Activated CD4-positive, alpha-beta memory T cell treated with anti-CD3 and anti-CD28 coated beads, Interleukin-2, amount 10 ng/mL, durations not matched to agents 7 days and 5 days (primary cell): ENCODE measurements at regions of chr6 and their contacts with region 1.

Region 1: DNA sequence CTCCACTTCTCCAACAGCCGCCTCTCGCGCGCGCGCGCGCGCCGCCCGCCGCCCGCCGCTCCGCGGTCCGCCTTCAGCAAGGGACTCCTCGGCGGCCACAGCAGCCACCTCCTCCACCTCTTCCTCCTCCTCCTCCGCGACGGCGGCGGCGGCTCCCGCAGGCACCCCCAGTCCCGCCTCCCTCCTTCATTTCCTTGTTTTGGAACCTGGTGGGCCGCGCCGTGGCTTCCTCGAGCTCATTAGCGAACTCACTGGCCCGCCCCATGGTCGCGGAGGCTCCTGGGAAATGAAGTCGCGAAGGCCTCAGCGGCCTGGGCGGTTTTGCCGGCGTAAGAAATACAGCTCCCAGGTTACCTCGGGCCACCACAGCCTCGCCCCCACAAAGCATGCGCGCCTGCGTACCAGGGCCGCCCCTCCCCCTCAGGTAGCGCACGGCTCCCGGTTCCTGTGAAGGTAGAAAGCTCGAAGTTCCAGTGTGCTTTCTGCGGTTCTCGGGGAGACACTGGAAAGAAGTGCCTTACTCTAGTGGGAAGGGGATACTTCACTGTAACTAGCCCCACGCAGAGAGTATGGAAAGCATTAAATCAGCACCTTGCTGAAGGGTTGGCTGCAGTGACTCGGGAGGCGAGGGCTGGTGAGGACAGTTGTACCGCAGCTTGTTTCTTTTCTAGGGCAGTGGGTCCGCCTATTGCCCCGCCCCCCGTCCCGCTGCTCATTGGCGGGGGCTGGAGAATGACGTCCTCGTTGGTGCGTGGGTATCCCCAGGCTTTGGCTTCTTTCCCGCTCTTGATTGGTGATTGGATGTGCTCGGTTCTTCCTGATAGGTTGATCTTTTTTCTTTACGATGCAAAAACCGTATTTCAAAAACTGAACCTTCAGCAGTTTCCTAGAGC is at the start of gene CDK19:
- DNase-seq: peak; percentile 99
- H3K4me3 Mint-ChIP-seq: peak within 1 kb of the TSS; percentile 100
- H3K27ac Mint-ChIP-seq: peak within 1 kb of the TSS; percentile 99
- H3K4me1 Mint-ChIP-seq: peaks cover 56% of the 10 kb centered on the region
- H3K27me3 Mint-ChIP-seq: no peaks in the 10 kb centered on the region
- total RNA-seq, gene CDK19: 30.8 to 33.2 TPM

Region 2: DNA sequence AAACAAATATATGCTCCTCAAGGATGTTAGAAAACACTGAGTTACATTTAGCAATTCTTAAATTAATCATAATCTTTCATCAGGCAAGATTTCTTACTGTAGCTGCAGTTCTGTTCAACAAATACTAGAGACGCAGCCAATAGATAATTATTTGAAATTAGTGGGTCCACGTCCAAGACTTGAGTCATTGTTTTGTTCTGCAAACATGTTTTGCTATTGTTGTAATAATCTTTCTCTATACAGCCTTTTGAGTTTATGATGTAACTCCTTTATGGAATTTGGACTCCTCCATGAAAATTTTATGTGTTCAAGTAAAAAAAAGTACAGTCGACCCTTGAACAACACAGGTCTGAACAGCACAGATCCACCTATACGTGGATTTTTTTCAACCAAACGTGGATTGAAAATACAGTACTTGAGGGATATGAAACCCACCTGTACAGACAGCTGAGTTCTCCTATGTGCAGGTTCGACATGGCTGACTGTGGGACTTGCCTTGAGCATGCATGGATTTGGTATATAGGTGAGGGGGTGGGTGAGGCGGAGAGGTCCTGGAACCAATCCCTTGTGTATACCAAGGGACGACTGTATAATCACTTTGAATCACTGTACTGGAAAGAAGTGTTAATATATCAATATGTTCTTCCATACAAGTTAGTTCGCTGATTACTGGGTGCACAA is 297.7 kb before region 1 on chr6:
- CTCF ChIA-PET with region 1: no interaction called
- POLR2A ChIA-PET with region 1: no interaction called
- DNase-seq: no peak
- H3K4me3 Mint-ChIP-seq: no peak overlapping the region
- H3K27ac Mint-ChIP-seq: no peak overlapping the region
- H3K4me1 Mint-ChIP-seq: no peaks in the 10 kb centered on the region
- H3K27me3 Mint-ChIP-seq: peaks cover 9% of the 10 kb centered on the region

Region 3: GRCh38 chr6:110560239-110561007 is 255.0 kb before region 1 on chr6:
- CTCF ChIA-PET with region 1: no interaction called
- POLR2A ChIA-PET with region 1: interaction called, 13 read pairs
- DNase-seq: peak; percentile 39
- H3K4me3 Mint-ChIP-seq: peak overlapping the region; percentile 19
- H3K27ac Mint-ChIP-seq: peak overlapping the region; percentile 98
- H3K4me1 Mint-ChIP-seq: peaks cover 37% of the 10 kb centered on the region
- H3K27me3 Mint-ChIP-seq: no peaks in the 10 kb centered on the region

Region 4: GRCh38 chr6:110688661-110689268 is 126.7 kb before region 1 on chr6:
- CTCF ChIA-PET with region 1: no interaction called
- POLR2A ChIA-PET with region 1: interaction called, 15 read pairs
- DNase-seq: no peak
- H3K4me3 Mint-ChIP-seq: no peak overlapping the region
- H3K27ac Mint-ChIP-seq: no peak overlapping the region
- H3K4me1 Mint-ChIP-seq: peaks cover 26% of the 10 kb centered on the region
- H3K27me3 Mint-ChIP-seq: no peaks in the 10 kb centered on the region

Region 5: DNA sequence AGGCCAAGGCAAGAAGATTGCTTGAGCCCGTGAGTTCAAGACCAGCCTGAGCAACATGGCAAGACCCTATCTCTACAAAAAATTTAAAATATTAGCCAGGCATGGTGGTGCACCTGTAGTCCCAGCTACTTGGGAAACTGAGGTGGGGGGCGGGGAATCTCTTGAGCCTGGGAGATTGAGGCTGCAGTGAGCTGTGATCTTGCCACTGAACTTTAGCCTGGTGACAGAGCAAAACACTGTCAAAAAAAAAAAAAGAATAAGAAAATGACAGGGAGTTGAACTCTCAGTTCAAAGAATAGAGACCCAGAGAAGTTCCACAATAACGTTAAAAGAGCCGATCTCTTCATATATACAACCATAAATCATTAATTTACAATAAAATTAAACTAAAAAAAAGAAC is 34.3 kb after region 1 on chr6:
- CTCF ChIA-PET with region 1: no interaction called
- POLR2A ChIA-PET with region 1: no interaction called
- DNase-seq: no peak
- H3K4me3 Mint-ChIP-seq: no peak overlapping the region
- H3K27ac Mint-ChIP-seq: no peak overlapping the region
- H3K4me1 Mint-ChIP-seq: no peaks in the 10 kb centered on the region
- H3K27me3 Mint-ChIP-seq: peaks cover 2% of the 10 kb centered on the region

Region 6: GRCh38 chr6:110864824-110865223 is 49.4 kb after region 1 on chr6:
- CTCF ChIA-PET with region 1: interaction called, 6 read pairs
- POLR2A ChIA-PET with region 1: interaction called, 27 read pairs
- DNase-seq: no peak
- H3K4me3 Mint-ChIP-seq: no peak overlapping the region
- H3K27ac Mint-ChIP-seq: no peak overlapping the region
- H3K4me1 Mint-ChIP-seq: peaks cover 12% of the 10 kb centered on the region
- H3K27me3 Mint-ChIP-seq: no peaks in the 10 kb centered on the region

Region 7: GRCh38 chr6:110882271-110882613 is 66.8 kb after region 1 on chr6:
- CTCF ChIA-PET with region 1: interaction called, 56 read pairs
- POLR2A ChIA-PET with region 1: interaction called, 813 read pairs
- DNase-seq: no peak
- H3K4me3 Mint-ChIP-seq: no peak overlapping the region
- H3K27ac Mint-ChIP-seq: peak overlapping the region; percentile 45
- H3K4me1 Mint-ChIP-seq: peaks cover 87% of the 10 kb centered on the region
- H3K27me3 Mint-ChIP-seq: no peaks in the 10 kb centered on the region

Region 8: DNA sequence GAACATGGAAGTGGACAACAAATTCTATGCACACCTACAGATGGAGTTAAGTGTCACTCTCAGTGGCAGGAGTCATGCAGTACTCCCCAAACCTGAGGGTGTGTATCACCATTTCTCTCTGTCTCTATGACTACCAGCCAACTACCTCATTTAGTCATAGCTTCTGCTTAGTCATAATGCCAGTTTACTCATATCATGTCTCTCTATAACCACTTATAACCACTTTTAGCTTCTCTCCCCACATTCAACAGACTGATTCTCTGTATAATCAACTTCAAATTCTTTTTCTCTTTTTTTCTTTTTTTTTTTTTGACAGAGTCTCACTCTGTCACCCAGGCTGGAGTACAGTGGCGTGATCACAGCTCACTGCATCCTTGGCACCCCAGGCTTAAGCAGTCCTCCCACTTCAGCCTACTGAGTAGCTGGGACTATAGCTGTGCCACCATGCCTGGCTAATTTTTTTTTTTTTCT is 129.3 kb after region 1 on chr6:
- CTCF ChIA-PET with region 1: interaction called, 5 read pairs
- POLR2A ChIA-PET with region 1: interaction called, 27 read pairs
- DNase-seq: peak; percentile 55
- H3K4me3 Mint-ChIP-seq: no peak overlapping the region
- H3K27ac Mint-ChIP-seq: peak overlapping the region; percentile 75
- H3K4me1 Mint-ChIP-seq: peaks cover 13% of the 10 kb centered on the region
- H3K27me3 Mint-ChIP-seq: no peaks in the 10 kb centered on the region

Region 9: GRCh38 chr6:110981202-110981600 is 165.7 kb after region 1 on chr6:
- CTCF ChIA-PET with region 1: interaction called, 4 read pairs
- POLR2A ChIA-PET with region 1: interaction called, 35 read pairs
- DNase-seq: no peak
- H3K4me3 Mint-ChIP-seq: peak overlapping the region; percentile 99
- H3K27ac Mint-ChIP-seq: peak overlapping the region; percentile 97
- H3K4me1 Mint-ChIP-seq: peaks cover 54% of the 10 kb centered on the region
- H3K27me3 Mint-ChIP-seq: no peaks in the 10 kb centered on the region

Region 10: GRCh38 chr6:111057074-111057752 is 241.8 kb after region 1 on chr6:
- CTCF ChIA-PET with region 1: no interaction called
- POLR2A ChIA-PET with region 1: no interaction called
- DNase-seq: no peak
- H3K4me3 Mint-ChIP-seq: no peak overlapping the region
- H3K27ac Mint-ChIP-seq: no peak overlapping the region
- H3K4me1 Mint-ChIP-seq: no peaks in the 10 kb centered on the region
- H3K27me3 Mint-ChIP-seq: peaks cover 17% of the 10 kb centered on the region